Adrenal gland (tissue), 19 donors: ENCODE measurements at regions of chr11 and their contacts with region 1.

Region 1: DNA sequence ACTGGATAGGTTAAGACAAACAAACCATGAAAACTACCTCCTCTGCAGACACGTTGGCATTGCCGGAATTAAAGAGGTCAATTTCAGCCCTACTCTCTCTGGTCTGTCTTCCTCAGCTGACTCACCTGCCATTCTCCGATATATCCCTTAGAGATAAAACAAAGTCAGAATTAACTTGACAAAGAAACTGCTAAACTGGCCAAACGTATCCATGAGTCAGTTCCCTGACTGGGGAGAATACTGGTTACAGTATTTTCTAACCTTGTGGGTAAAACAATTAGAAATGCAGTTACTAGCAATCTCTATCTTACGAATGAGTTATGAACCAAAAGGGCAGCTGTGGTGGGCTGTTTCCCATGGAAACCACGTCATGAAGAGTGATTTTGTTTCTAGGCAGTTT is 96.2 kb downstream of the RDX start:
- DNase-seq: peak in 1 of 7 donors; percentile 38
- H3K4me3 ChIP-seq: no peak overlapping the region
- H3K27ac ChIP-seq: peak overlapping the region in 4 of 5 donors; percentile 25 to 57 (median 34)
- H3K4me1 ChIP-seq: peaks cover 13 to 17% of the 10 kb centered on the region in 2 donors
- H3K27me3 ChIP-seq: no peaks in the 10 kb centered on the region
- CTCF ChIP-seq: no peak
- POLR2A ChIP-seq: no peak

Region 2: DNA sequence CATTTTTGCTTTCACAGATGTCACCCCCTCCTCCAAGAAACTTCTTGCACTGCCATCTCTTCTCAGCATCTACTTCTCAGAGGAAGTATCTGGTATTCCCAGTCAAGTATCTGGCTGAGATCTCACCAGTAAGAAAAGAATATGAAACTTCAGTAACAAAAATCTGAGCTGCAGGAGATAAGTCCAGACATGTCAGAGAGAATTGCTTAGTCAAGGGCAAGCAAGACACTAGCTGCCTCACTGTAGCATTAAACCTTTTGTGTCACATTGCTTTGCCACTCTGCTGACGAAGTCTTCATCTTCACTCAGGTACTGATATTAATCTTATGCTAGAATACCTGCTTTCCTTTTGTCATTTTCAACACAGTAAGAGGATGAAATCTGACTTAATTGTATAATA is 177.7 kb before region 1 on chr11:
- intact Hi-C with region 1: no loop called
- DNase-seq: no peak
- H3K4me3 ChIP-seq: no peak overlapping the region
- H3K27ac ChIP-seq: no peak overlapping the region
- H3K4me1 ChIP-seq: no peaks in the 10 kb centered on the region
- H3K27me3 ChIP-seq: no peaks in the 10 kb centered on the region
- CTCF ChIP-seq: no peak
- POLR2A ChIP-seq: no peak

Region 3: GRCh38 chr11:110287537-110287936 is 87.3 kb after region 1 on chr11:
- intact Hi-C with region 1: loop called in 1 of 2 experiments (anchors 10 kb)
- DNase-seq: no peak
- H3K4me3 ChIP-seq: no peak overlapping the region
- H3K27ac ChIP-seq: peak overlapping the region in 1 of 5 donors; percentile 6
- H3K4me1 ChIP-seq: peaks cover 55 to 96% of the 10 kb centered on the region in 2 donors
- H3K27me3 ChIP-seq: no peaks in the 10 kb centered on the region
- CTCF ChIP-seq: no peak
- POLR2A ChIP-seq: no peak

Region 4: GRCh38 chr11:110376711-110377324 is 176.6 kb after region 1 on chr11:
- intact Hi-C with region 1: loop called (anchors 5 to 10 kb)
- DNase-seq: peak; percentile 76 to 93 (median 87)
- H3K4me3 ChIP-seq: peak overlapping the region in 1 of 4 donors; percentile 43
- H3K27ac ChIP-seq: peak overlapping the region; percentile 49 to 87 (median 72)
- H3K4me1 ChIP-seq: peaks cover 40 to 73% of the 10 kb centered on the region in 2 donors
- H3K27me3 ChIP-seq: no peaks in the 10 kb centered on the region
- CTCF ChIP-seq: peak; percentile 68 to 88 (median 82)
- POLR2A ChIP-seq: peak in 1 of 2 donors; percentile 60

Region 5: GRCh38 chr11:110429731-110430266 is 229.6 kb after region 1 on chr11 and contains the start of gene FDX1:
- intact Hi-C with region 1: loop called in 1 of 2 experiments (anchors 5 kb)
- DNase-seq: peak; percentile 89 to 93 (median 92)
- H3K4me3 ChIP-seq: peak within 1 kb of the TSS; percentile 47 to 100 (median 80)
- H3K27ac ChIP-seq: peak within 1 kb of the TSS; percentile 89 to 98 (median 96)
- H3K4me1 ChIP-seq: peaks cover 17 to 26% of the 10 kb centered on the region in 2 donors
- H3K27me3 ChIP-seq: no peaks in the 10 kb centered on the region
- CTCF ChIP-seq: peak in 3 of 6 experiments; percentile 56 to 85 (median 80)
- POLR2A ChIP-seq: peak; percentile 88 to 90
- total RNA-seq, gene FDX1: 124 to 1,285 (median 324) TPM